ENCODE measurements at regions of chr16 and their contacts with region 1.

Region 1: DNA sequence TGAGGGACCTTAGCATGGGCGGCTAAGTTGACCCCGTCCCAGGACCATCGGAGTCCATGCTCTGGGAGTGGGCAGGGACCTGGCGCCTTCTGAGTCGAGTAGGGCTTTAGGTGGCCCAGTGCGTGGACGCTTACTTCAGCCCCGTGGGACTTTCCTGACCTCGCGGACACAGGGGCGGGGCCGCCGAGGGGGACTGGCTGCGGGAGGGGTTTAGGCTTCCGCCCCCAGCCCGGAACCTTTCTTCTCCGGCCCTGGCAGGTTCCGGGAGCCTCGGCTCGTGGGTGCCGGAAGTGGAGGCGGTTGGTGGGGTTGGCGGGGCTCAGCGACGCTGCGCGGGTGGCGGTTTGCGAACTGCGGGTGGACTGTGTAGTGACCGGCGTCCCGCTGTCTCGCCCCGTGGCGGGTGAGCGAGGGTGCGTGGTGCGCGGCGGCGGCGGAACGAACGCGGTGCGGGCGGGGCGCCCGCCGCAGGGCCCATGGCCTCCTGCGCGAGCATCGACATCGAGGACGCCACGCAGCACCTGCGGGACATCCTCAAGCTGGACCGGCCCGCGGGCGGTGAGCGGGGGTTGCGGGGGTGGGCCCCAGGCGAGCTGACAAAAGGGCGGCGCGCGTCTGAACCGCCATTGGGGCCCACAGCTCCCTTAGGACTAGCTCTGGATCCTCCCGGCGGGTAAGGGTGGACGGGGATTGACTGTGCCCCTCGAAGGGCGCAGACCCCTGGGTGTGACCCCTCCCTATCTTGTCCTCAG is at the start of gene EDC4:
- DNase-seq: peak; percentile 90
- ATAC-seq: peak; percentile 90
- H3K4me3 ChIP-seq: peak within 1 kb of the TSS; percentile 59 to 98 (median 88)
- H3K4me3 Mint-ChIP-seq: peak within 1 kb of the TSS; percentile 91
- H3K27ac ChIP-seq: peak within 1 kb of the TSS; percentile 74 to 81
- H3K27ac Mint-ChIP-seq: peak within 1 kb of the TSS; percentile 90
- H3K4me1 ChIP-seq: peaks cover 23 to 25% of the 10 kb centered on the region in 2 donors
- H3K4me1 Mint-ChIP-seq: peaks cover 37% of the 10 kb centered on the region
- H3K27me3 ChIP-seq: no peaks in the 10 kb centered on the region
- H3K27me3 Mint-ChIP-seq: no peaks in the 10 kb centered on the region
- CTCF ChIP-seq: no peak
- total RNA-seq, gene EDC4: 83.3 and 95.1 TPM in 2 replicates

Region 2: GRCh38 chr16:67719048-67719777 is 153.7 kb before region 1 on chr16 and contains the start of gene GFOD2:
- CTCF ChIA-PET with region 1: no interaction called
- POLR2A ChIA-PET with region 1: no interaction called
- intact Hi-C with region 1: loop called (anchors 1 kb)
- DNase-seq: peak; percentile 97
- ATAC-seq: peak; percentile 94
- H3K4me3 ChIP-seq: peak within 1 kb of the TSS; percentile 66 to 93 (median 87)
- H3K4me3 Mint-ChIP-seq: peak within 1 kb of the TSS; percentile 99
- H3K27ac ChIP-seq: peak within 1 kb of the TSS; percentile 89 to 93
- H3K27ac Mint-ChIP-seq: peak within 1 kb of the TSS; percentile 98
- H3K4me1 ChIP-seq: peaks cover 18 to 20% of the 10 kb centered on the region in 2 donors
- H3K4me1 Mint-ChIP-seq: peaks cover 38% of the 10 kb centered on the region
- H3K27me3 ChIP-seq: no peaks in the 10 kb centered on the region
- H3K27me3 Mint-ChIP-seq: no peaks in the 10 kb centered on the region
- CTCF ChIP-seq: no peak
- total RNA-seq, gene GFOD2: 18.1 and 18.2 TPM in 2 replicates

Region 3: GRCh38 chr16:67833418-67834241 is 39.3 kb before region 1 on chr16:
- CTCF ChIA-PET with region 1: no interaction called
- POLR2A ChIA-PET with region 1: interaction called, 4 read pairs
- intact Hi-C with region 1: loop called (anchors 5 kb)
- DNase-seq: peak; percentile 92
- ATAC-seq: peak; percentile 100
- H3K4me3 ChIP-seq: peak overlapping the region; percentile 47 to 76 (median 75)
- H3K4me3 Mint-ChIP-seq: peak overlapping the region; percentile 89
- H3K27ac ChIP-seq: peak overlapping the region in 1 of 2 donors; percentile 64
- H3K27ac Mint-ChIP-seq: peak overlapping the region; percentile 83
- H3K4me1 ChIP-seq: peaks cover 12 to 16% of the 10 kb centered on the region in 2 donors
- H3K4me1 Mint-ChIP-seq: peaks cover 16% of the 10 kb centered on the region
- H3K27me3 ChIP-seq: no peaks in the 10 kb centered on the region
- H3K27me3 Mint-ChIP-seq: no peaks in the 10 kb centered on the region
- CTCF ChIP-seq: no peak

Region 4: GRCh38 chr16:67892899-67893742 is 20.2 kb after region 1 on chr16 and contains the start of gene PSKH1:
- CTCF ChIA-PET with region 1: interaction called, 3 read pairs
- POLR2A ChIA-PET with region 1: no interaction called
- intact Hi-C with region 1: loop called (anchors 1 kb)
- DNase-seq: peak; percentile 95
- ATAC-seq: peak; percentile 99
- H3K4me3 ChIP-seq: peak within 1 kb of the TSS; percentile 61 to 92 (median 76)
- H3K4me3 Mint-ChIP-seq: peak within 1 kb of the TSS; percentile 90
- H3K27ac ChIP-seq: peak within 1 kb of the TSS; percentile 77 to 95
- H3K27ac Mint-ChIP-seq: peak within 1 kb of the TSS; percentile 85
- H3K4me1 ChIP-seq: peaks cover 16 to 18% of the 10 kb centered on the region in 2 donors
- H3K4me1 Mint-ChIP-seq: peaks cover 31% of the 10 kb centered on the region
- H3K27me3 ChIP-seq: no peaks in the 10 kb centered on the region
- H3K27me3 Mint-ChIP-seq: no peaks in the 10 kb centered on the region
- CTCF ChIP-seq: no peak
- total RNA-seq, gene PSKH1: 29.1 TPM in 2 replicates

Measured in B cell (primary cell).